ENCODE measurements at regions of chr9 and their contacts with region 1.

Region 1: DNA sequence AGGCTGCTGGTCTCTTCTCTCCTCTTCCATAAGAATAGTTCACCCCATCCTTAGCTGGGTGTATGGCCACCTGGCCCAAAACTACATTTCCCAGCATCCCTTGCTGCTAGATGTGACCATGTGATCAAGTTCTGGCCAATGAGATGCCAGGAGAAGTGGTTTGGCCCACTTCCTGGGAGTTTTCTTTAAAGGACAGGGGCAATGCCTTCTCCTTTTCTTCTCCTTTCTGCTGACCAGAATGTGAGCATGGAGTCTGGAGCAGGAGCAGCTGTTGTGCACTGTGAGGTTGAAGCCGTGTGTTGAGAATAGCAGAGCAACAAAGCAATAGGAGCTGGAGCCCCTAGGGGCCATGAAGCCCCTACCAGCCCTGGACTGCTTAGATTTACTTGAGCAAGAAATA is 36.8 kb downstream of the C9orf50 start:
- DNase-seq: peak in 41 of 42 donors; percentile 42 to 91 (median 77)

Region 2: DNA sequence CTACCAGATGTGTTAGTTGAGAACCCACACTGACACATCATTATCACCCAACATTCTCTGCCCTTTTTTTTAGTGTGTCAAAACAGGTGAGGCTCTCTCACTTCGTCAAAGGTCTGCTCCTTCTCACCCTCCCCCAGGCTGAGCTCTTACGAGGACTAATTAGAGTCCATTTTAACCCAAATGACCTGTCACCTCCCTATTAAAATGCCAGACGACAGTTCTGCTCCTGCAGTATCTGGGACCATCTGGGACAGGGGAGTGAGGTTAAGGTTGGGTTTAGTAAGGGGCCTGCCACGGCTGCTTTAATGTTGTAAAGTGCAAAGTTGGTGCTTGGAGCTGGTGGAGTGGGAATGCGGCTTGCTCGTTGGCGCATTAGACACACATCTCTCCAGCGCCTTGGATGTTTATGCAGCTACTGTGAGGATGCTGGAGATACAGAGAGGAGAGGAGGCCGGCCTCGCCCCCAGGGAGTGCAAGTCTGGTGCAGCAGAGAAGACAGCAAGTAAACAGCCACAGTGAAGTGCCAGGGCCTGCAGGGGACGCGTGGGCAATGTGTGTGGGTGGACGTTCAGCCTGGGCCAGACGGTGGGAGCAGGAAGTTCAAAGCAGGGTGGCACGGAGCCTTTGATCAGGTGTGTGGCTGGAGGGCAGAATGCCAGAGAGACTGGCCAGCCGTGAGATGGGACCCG is 59.4 kb before region 1 on chr9:
- intact Hi-C with region 1: loop called (anchors 10 kb)
- DNase-seq: no peak

Region 3: GRCh38 chr9:129650680-129651235 is 66.6 kb after region 1 on chr9:
- intact Hi-C with region 1: no loop called
- DNase-seq: peak in 9 of 42 donors; percentile 17 to 60 (median 48)

Region 4: DNA sequence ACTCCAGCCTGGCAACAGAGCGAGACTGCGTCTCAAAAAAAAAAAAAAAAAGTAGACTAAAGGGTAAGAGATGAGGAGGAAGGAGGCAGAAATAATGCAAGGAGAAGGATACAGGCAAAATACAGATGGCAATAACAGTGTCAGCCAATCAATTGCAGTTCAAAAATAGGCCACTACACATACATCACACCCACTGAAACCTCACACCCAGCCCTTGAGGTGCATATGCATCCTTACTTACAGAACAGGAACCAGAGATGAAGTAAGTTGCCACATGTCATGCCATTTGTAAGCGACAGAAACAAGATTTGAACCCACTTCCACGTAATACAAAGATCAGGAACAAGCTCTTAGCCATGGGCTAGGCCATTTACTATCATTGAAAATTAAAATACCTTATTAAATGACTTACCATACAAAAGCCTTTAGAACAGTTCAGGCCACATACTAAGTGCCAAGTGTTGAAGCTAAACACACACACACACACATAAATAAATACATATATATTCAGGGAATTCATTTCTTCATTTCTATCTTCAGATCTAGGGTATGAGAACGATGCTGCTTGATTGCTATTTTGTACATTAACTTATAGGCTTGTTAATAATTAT is 360.5 kb after region 1 on chr9:
- intact Hi-C with region 1: no loop called
- DNase-seq: peak in 8 of 42 donors; percentile 26 to 54 (median 33)